Posterior vena cava (tissue), 2 donors: ENCODE measurements at regions of chr2 and their contacts with region 1.

Region 1: GRCh38 chr2:31239593-31240177 is 5.7 kb downstream of the EHD3 start:
- DNase-seq: peak; percentile 89

Region 2: DNA sequence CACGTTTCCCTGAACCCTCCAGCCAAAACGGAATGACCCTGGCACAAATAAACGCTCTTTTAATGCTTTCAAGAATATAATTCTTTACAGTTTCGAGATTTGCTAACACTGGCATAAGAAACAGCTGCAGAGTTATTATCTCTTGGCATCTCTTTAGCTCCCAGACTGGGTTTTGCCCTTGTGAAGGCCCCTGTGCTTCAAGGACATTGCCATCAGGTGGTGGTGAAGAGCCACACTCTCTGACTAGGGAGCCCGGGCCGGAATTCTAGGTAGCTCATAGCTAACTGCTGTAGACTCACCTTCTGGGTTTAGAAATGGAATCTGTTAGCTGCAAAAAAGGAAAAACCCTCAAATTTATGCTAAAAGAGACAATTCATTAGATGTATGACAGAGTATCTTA is 88.2 kb before region 1 on chr2:
- intact Hi-C with region 1: no loop called
- DNase-seq: no peak

Region 3: GRCh38 chr2:31297751-31298150 is 58.1 kb after region 1 on chr2:
- intact Hi-C with region 1: loop called in 1 of 2 experiments (anchors 5 kb)
- DNase-seq: no peak